ENCODE measurements at regions of chr14 and their contacts with region 1.

Region 1: GRCh38 chr14:68727315-68728047 is 65.4 kb downstream of the ZFP36L1 start:
- DNase-seq: peak; percentile 62
- H3K4me3 ChIP-seq: no peak overlapping the region
- H3K27ac ChIP-seq: no peak overlapping the region
- H3K4me1 ChIP-seq: peaks cover 17% of the 10 kb centered on the region
- H3K27me3 ChIP-seq: no peaks in the 10 kb centered on the region
- CTCF ChIP-seq: no peak
- POLR2A ChIP-seq: no peak

Region 2: GRCh38 chr14:68501614-68502052 is 225.8 kb before region 1 on chr14:
- CTCF ChIA-PET with region 1: no interaction called
- POLR2A ChIA-PET with region 1: no interaction called
- dilution Hi-C with region 1: no loop called
- intact Hi-C with region 1: loop called (anchors 1 kb)
- DNase-seq: no peak
- H3K4me3 ChIP-seq: no peak overlapping the region
- H3K27ac ChIP-seq: peak overlapping the region; percentile 13
- H3K4me1 ChIP-seq: peaks cover 19% of the 10 kb centered on the region
- H3K27me3 ChIP-seq: no peaks in the 10 kb centered on the region
- CTCF ChIP-seq: no peak
- POLR2A ChIP-seq: peak; percentile 8

Region 3: GRCh38 chr14:68598621-68599447 is 128.6 kb before region 1 on chr14:
- CTCF ChIA-PET with region 1: no interaction called
- POLR2A ChIA-PET with region 1: no interaction called
- dilution Hi-C with region 1: no loop called
- intact Hi-C with region 1: loop called (anchors 2 kb)
- DNase-seq: peak; percentile 97
- H3K4me3 ChIP-seq: no peak overlapping the region
- H3K27ac ChIP-seq: peak overlapping the region; percentile 82
- H3K4me1 ChIP-seq: peaks cover 24% of the 10 kb centered on the region
- H3K27me3 ChIP-seq: no peaks in the 10 kb centered on the region
- CTCF ChIP-seq: no peak
- POLR2A ChIP-seq: peak; percentile 55

Region 4: GRCh38 chr14:68695326-68695768 is 32.1 kb before region 1 on chr14:
- CTCF ChIA-PET with region 1: no interaction called
- POLR2A ChIA-PET with region 1: interaction called, 3 read pairs
- dilution Hi-C with region 1: no loop called
- intact Hi-C with region 1: loop called (anchors 1 kb)
- DNase-seq: peak; percentile 96
- H3K4me3 ChIP-seq: no peak overlapping the region
- H3K27ac ChIP-seq: peak overlapping the region; percentile 80
- H3K4me1 ChIP-seq: peaks cover 26% of the 10 kb centered on the region
- H3K27me3 ChIP-seq: no peaks in the 10 kb centered on the region
- CTCF ChIP-seq: no peak
- POLR2A ChIP-seq: peak; percentile 29

Region 5: DNA sequence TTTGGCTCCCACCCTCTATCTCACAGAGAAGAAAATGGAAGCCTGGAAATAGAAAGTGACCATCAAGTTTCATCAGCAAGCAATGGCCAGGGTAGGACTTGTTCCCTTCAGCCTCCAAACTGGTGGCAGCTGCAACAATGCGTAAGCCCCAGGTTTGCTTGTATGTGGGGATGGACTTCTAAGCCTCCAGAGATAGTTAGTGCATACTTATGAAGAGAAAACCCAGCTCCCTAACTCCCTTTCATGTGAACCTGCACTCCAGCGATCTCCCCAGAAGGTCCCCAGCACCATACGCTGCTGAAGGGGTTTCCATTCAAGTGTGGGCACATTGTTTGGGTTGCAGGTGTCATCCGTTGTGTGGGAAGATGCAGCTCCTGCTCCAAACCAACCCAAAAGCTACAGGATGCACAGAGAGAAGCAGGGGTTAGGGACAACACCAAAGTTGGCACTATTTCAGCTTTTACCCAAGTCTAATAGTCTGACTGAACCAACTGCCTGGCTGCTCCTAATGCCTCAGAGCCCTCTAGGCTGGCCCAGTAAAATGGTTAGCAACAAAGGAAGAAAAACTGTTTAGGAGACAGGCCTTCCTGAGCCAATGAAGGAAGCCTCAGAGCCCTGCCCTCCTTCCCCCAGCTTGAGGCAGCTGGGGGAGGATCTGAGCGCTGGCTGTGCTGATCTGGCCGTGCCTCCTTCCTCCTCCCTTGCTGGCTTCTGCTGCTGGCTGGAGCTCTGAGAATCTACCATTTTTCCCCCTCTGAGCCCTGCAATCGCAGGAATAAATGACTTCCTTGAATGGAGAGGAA is 53.1 kb after region 1 on chr14:
- CTCF ChIA-PET with region 1: no interaction called
- POLR2A ChIA-PET with region 1: interaction called, 3 read pairs
- dilution Hi-C with region 1: no loop called
- intact Hi-C with region 1: loop called (anchors 2 kb)
- DNase-seq: peak; percentile 57
- H3K4me3 ChIP-seq: no peak overlapping the region
- H3K27ac ChIP-seq: peak overlapping the region; percentile 51
- H3K4me1 ChIP-seq: peaks cover 43% of the 10 kb centered on the region
- H3K27me3 ChIP-seq: no peaks in the 10 kb centered on the region
- CTCF ChIP-seq: no peak
- POLR2A ChIP-seq: no peak

Region 6: DNA sequence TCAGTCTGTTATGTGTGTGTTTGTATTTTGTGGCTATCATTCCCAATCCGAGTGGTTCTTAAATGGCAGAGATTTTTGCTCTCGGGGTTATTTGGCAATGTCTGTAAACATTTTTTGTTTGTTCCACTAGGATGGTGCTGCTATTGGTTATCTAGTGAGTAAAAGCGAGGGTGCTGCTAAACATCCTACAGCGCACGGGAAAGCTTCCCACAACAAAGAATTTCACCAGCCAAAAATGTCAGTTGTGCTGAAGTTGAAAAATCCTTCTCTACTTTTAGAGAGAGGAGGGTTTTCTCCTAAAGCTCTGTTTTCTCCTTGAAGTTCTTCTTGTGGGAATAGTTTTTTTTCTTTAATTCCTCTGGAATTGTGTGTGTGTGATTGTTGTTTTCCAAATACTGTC is 466.2 kb after region 1 on chr14:
- CTCF ChIA-PET with region 1: no interaction called
- POLR2A ChIA-PET with region 1: no interaction called
- dilution Hi-C with region 1: no loop called
- intact Hi-C with region 1: no loop called
- DNase-seq: no peak
- H3K4me3 ChIP-seq: no peak overlapping the region
- H3K27ac ChIP-seq: no peak overlapping the region
- H3K4me1 ChIP-seq: peaks cover 7% of the 10 kb centered on the region
- H3K27me3 ChIP-seq: no peaks in the 10 kb centered on the region
- CTCF ChIP-seq: no peak
- POLR2A ChIP-seq: no peak